ENCODE measurements at regions of chr11 and their contacts with region 1.

Region 1: DNA sequence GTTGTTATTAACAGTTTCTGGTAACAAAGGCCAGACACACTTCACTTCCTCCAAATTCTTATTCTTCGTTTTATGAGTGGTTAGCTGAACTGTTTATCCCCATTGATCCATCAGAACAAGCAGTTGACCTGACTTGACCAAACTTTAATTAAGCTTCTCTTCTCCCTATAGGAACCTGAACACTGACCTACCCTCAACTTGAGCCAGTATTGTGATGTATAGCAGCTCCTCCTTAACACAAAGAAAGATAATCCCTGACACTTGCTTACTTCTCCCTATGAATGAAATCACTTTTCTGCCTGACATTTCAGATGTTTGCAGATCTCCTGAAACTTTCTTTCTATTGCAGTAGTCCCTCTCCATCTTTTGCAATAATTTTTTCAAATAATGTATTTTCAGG is 41.9 kb downstream of the ANO5 start:
- DNase-seq: no peak
- ATAC-seq: no peak
- H3K4me3 ChIP-seq: no peak overlapping the region
- H3K27ac ChIP-seq: no peak overlapping the region
- H3K4me1 ChIP-seq: no peaks in the 10 kb centered on the region
- H3K27me3 ChIP-seq: no peaks in the 10 kb centered on the region
- CTCF ChIP-seq: no peak
- POLR2A ChIP-seq: no peak

Region 2: GRCh38 chr11:22115470-22116029 is 119.2 kb before region 1 on chr11:
- intact Hi-C with region 1: loop called in 1 of 10 experiments (anchors 5 kb)
- DNase-seq: peak in 3 of 5 donors; percentile 13 to 48 (median 32)
- ATAC-seq: peak; percentile 92 to 99 (median 98)
- H3K4me3 ChIP-seq: no peak overlapping the region
- H3K27ac ChIP-seq: peak overlapping the region in 8 of 12 donors; percentile 15 to 73 (median 58)
- H3K4me1 ChIP-seq: peaks cover 0 to 15% (median 0%) of the 10 kb centered on the region in 12 donors
- H3K27me3 ChIP-seq: no peaks in the 10 kb centered on the region
- CTCF ChIP-seq: no peak
- POLR2A ChIP-seq: no peak

Region 3: DNA sequence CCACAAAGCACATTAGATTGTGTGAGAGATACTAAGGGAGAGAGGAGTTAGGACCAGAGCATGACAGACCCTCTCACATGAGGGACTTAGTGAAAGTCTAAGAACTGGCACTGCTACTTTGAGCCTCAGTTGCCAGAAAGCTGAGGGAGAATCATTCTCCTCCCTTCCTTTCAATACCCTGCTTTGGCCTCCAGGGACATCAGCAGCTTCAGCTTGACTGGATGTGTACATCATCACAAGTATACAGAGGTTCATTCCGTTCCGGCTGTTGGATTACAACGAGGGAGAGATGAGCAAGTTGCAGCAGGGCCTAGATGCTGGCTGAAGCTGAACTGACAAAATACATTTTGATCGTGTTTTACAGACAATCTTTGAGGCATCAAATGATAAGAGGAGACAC is 57.6 kb before region 1 on chr11:
- intact Hi-C with region 1: loop called in 1 of 10 experiments (anchors 5 kb)
- DNase-seq: no peak
- ATAC-seq: no peak
- H3K4me3 ChIP-seq: no peak overlapping the region
- H3K27ac ChIP-seq: no peak overlapping the region
- H3K4me1 ChIP-seq: no peaks in the 10 kb centered on the region
- H3K27me3 ChIP-seq: no peaks in the 10 kb centered on the region
- CTCF ChIP-seq: peak in 2 of 12 donors; percentile 6 to 22
- POLR2A ChIP-seq: no peak

Region 4: DNA sequence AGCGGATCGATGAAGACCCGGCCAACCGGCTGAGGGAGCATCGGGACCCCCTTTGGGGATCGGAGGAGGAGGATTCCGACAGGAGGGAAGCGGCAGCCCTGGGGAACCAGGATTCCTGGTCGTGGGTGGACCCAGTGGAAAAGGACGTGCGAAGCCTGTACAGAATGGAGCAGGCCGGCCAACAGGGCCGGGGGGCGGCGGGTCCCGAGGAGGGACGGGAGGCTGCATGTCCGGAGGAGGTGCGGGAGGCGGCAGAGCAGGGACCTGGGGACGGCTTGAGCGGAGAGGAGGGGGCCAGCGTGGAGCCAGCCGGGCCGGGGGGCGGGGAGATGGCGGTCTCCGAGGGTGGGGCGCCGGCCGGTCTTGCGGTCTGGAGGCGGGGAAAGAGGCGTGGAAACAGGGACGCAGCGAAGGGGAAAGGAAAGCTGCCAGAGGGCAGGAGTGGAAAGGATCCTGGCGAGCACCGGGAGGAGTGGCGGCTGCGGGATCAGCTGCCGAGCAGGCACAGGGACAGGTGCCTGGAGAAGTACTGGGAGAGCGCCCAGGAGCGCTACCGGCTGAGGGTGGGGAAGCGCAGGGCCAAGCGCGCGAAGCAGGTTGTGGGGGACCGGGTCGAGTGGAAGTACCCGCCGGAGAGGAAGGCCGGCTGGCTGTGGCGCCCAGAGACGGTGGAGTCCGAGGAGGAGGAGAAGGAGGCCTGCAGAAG is 41.9 kb before region 1 on chr11 and contains the start of gene ANO5:
- intact Hi-C with region 1: no loop called
- DNase-seq: peak; percentile 80 to 87 (median 84)
- ATAC-seq: peak; percentile 89 to 94 (median 93)
- H3K4me3 ChIP-seq: peak within 1 kb of the TSS; percentile 48 to 83 (median 65)
- H3K27ac ChIP-seq: peak within 1 kb of the TSS; percentile 66 to 90 (median 82)
- H3K4me1 ChIP-seq: peaks cover 0 to 20% (median 2%) of the 10 kb centered on the region in 12 donors
- H3K27me3 ChIP-seq: peaks cover 0 to 8% (median 0%) of the 10 kb centered on the region in 9 donors
- CTCF ChIP-seq: peak in 1 of 12 donors; percentile 1
- POLR2A ChIP-seq: peak; percentile 46 to 80
- total RNA-seq, gene ANO5: 42.1 to 86.8 (median 61.1) TPM

Region 5: DNA sequence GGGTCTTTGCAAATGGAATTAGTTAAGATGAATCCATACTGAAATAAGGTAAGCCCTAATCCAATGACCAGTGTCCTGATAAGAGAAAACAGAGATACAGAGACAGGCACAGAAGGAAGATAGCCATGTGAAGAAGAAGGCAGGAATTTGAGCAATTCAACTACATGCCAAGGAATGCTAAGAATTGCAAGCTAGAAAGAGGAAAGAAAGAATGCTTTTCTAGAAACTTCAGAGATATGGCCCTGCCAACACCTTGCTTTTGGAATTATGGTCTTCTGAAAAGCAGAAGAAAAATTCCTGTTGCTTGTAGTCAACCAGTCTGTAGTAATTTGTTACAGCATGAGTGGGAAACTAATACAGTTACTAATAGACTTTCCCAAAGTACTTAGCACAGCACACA is 214.7 kb after region 1 on chr11:
- intact Hi-C with region 1: no loop called
- DNase-seq: no peak
- ATAC-seq: no peak
- H3K4me3 ChIP-seq: no peak overlapping the region
- H3K27ac ChIP-seq: no peak overlapping the region
- H3K4me1 ChIP-seq: no peaks in the 10 kb centered on the region
- H3K27me3 ChIP-seq: no peaks in the 10 kb centered on the region
- CTCF ChIP-seq: no peak
- POLR2A ChIP-seq: no peak

Measured in heart left ventricle (tissue), 16 donors.